Body of pancreas (tissue), 4 donors: ENCODE measurements at regions of chr1 and their contacts with region 1.

Region 1: GRCh38 chr1:18575620-18576019 is 55.0 kb upstream of the PAX7 start:
- DNase-seq: peak; percentile 60 to 79 (median 74)
- ATAC-seq: peak; percentile 35
- H3K4me3 ChIP-seq: no peak overlapping the region
- H3K27ac ChIP-seq: no peak overlapping the region
- H3K4me1 ChIP-seq: no peaks in the 10 kb centered on the region
- H3K27me3 ChIP-seq: peaks cover 0 to under 1% of the 10 kb centered on the region in 2 donors
- CTCF ChIP-seq: peak; percentile 61 to 88 (median 73)
- POLR2A ChIP-seq: no peak

Region 2: GRCh38 chr1:17984583-17984982 is 591.0 kb before region 1 on chr1:
- intact Hi-C with region 1: loop called (anchors 10 kb)
- DNase-seq: peak; percentile 28 to 50 (median 43)
- ATAC-seq: no peak
- H3K4me3 ChIP-seq: no peak overlapping the region
- H3K27ac ChIP-seq: no peak overlapping the region
- H3K4me1 ChIP-seq: no peaks in the 10 kb centered on the region
- H3K27me3 ChIP-seq: no peaks in the 10 kb centered on the region
- CTCF ChIP-seq: peak; percentile 18 to 62 (median 50)
- POLR2A ChIP-seq: no peak

Region 3: DNA sequence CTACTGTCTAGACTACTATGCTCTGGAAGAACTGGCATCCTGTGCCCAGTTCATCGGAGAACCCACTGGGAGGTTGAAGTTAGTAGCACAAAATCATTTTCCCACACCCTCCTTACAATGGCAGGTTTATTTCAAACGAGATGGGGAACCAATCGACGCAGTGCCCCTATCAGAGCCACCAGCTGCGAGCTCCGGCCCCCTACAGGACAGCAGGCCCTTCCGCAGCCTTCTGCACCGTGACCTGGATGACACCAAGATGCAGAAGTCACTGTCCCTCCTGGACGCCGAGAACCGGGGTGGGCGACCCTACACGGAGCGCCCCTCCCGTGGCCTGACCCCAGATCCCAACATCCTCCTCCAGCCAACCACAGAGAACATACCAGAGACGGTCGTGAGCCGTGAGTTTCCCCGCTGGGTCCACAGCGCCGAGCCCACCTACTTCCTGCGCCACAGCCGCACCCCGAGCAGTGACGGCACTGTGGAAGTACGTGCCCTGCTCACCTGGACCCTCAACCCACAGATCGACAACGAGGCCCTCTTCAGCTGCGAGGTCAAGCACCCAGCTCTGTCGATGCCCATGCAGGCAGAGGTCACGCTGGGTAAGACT is 210.4 kb before region 1 on chr1:
- intact Hi-C with region 1: no loop called
- DNase-seq: no peak
- ATAC-seq: no peak
- H3K4me3 ChIP-seq: no peak overlapping the region
- H3K27ac ChIP-seq: no peak overlapping the region
- H3K4me1 ChIP-seq: no peaks in the 10 kb centered on the region
- H3K27me3 ChIP-seq: no peaks in the 10 kb centered on the region
- CTCF ChIP-seq: no peak
- POLR2A ChIP-seq: no peak

Region 4: DNA sequence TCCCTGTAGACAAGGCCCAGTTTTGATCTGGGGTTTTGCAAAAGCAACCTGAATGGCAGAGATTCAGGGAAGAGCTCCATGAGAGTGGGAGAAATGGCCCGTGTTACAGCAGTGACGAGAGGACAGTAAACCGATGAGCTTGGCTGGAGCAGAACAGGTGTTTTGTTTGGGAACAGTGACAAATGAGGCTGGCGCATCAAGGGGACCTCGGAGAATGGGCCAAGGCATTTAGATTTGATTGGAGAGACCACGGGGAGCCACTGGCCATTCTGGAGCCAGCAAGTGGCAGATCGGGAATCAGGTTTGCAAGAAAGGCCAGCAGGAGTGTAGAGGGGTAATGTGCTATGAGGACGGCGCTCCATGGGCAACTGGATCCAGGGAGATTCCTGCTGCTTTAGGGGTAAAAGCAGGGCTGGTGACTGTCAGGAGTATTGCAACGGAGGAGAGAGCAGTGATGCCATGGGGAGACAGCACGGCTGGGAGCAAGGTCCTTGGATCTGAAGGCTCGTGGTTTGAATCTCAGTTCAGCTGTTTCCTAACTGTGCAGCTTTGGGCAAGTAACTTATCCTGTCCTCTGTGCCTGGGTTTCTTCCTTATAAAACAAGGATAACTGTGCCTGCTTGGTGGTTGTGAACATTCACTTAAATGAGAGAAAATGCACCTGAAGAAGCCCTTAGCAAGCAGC is 104.8 kb before region 1 on chr1:
- intact Hi-C with region 1: no loop called
- DNase-seq: no peak
- ATAC-seq: no peak
- H3K4me3 ChIP-seq: no peak overlapping the region
- H3K27ac ChIP-seq: no peak overlapping the region
- H3K4me1 ChIP-seq: no peaks in the 10 kb centered on the region
- H3K27me3 ChIP-seq: no peaks in the 10 kb centered on the region
- CTCF ChIP-seq: no peak
- POLR2A ChIP-seq: no peak

Region 5: DNA sequence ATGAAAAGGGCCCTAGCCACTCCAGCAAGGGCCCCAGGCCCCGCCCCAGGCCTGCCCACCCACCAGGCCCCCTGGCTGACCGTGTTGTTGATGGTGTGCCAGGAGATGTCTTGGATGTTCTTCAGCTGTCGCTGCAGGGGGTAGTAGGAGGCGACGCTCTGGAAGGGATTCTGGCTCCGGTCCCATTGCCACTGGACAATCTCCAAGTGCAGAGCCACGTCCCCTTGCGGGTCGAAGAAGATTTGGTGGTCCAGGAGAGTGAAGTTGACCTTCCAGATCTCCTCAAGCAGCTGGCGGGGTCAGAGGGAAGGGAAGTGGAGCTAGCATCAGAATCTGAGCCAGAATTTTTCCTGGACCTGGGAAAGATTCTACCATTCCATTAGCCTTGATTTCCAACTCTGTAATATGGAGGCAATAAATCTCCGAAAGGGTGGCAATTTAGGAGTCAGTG is 273.7 kb after region 1 on chr1:
- intact Hi-C with region 1: no loop called
- DNase-seq: no peak
- ATAC-seq: no peak
- H3K4me3 ChIP-seq: no peak overlapping the region
- H3K27ac ChIP-seq: no peak overlapping the region
- H3K4me1 ChIP-seq: no peaks in the 10 kb centered on the region
- H3K27me3 ChIP-seq: no peaks in the 10 kb centered on the region
- CTCF ChIP-seq: no peak
- POLR2A ChIP-seq: no peak